WTC11 (cell line): ENCODE measurements at regions of chr11 and their contacts with region 1.

Region 1: DNA sequence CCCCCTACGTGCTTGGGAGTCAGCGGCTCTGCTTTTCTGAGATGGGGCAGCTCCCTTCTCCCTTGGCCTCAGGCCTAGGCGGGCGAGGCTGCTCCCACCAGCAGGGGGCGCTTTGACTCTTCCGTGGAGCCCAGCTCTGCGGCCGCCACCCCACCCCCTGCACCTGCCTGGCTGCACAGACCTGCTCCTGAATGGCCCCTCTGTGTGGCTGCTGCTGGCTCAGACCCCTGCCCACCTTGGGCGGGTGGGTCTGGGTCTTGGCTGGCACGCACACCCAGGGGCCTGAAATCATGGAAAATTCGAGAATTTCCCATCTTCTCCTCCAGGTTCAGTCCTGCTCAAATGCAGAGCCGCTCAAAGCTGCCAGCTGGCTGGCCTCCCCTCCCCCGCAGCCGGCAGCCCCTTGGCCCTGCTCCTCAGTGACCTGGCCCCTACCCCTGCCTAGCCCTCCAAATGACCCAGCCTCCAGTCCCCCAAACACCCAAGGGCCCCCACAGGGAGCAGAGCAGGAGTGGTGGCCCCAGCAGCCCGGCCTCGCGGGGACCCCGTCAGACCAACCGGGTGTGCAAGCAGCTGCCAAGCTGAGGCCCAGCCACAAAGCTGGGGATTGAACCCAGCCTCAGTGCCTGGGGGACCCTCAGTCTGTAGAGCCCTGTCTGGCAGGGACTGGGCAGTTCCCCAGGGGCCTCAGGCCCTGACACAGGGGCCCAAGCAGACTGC is 9.0 kb downstream of the PRR33 start:
- DNase-seq: peak; percentile 89
- ATAC-seq: peak; percentile 97
- H3K4me3 Mint-ChIP-seq: no peak overlapping the region
- H3K27ac Mint-ChIP-seq: no peak overlapping the region
- H3K4me1 Mint-ChIP-seq: no peaks in the 10 kb centered on the region
- H3K27me3 Mint-ChIP-seq: no peaks in the 10 kb centered on the region
- CTCF ChIP-seq: peak; percentile 95

Region 2: DNA sequence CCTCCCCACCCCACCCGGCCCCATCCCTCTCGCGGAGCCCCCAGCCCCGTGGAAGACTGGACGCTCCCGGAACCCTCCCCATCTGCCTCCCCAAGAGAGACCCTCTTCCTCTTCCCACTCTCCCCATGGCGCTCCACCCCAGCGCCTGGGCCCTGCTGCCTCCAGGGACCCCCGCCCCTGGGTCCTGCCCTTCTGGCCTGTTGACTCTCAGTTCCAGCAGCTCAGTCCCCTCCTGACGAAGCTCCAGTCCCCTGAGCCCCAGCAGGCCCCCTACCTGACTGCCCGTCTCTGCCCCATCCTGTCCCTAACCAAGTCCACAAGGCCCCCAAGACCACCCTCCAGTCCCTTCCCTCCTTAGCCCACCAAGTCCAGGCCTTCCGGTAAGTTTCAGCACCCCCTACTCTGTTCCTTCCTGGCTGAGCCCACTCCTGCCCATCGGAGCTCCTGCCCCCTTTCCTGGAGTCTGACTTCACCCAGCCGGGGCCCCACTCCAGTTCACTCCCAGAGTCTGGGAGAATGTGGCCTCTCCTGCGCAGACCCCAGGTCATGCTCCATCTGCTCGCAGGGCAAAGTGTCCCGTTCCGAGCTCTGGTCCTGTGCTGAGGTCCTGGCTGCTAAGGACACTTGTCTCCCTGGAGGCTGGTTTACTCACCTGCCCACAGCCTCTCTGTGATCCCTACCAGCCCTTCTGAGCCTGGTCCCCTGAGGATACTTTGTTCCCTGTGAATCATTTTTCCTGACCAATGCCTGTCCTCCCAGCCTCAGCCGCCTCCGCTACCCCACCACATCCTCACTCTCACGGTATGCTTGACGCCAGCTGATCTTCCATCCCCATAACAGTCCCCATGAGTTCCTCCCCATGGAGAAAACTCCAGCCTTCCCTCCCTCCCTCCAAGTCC is 133.0 kb before region 1 on chr11:
- CTCF ChIA-PET with region 1: no interaction called
- POLR2A ChIA-PET with region 1: no interaction called
- DNase-seq: no peak
- ATAC-seq: peak; percentile 6
- H3K4me3 Mint-ChIP-seq: peak overlapping the region; percentile 57
- H3K27ac Mint-ChIP-seq: no peak overlapping the region
- H3K4me1 Mint-ChIP-seq: peaks cover 12% of the 10 kb centered on the region
- H3K27me3 Mint-ChIP-seq: peaks cover 51% of the 10 kb centered on the region
- CTCF ChIP-seq: no peak

Region 3: GRCh38 chr11:1760351-1761109 is 122.1 kb before region 1 on chr11:
- CTCF ChIA-PET with region 1: no interaction called
- POLR2A ChIA-PET with region 1: no interaction called
- DNase-seq: no peak
- ATAC-seq: no peak
- H3K4me3 Mint-ChIP-seq: no peak overlapping the region
- H3K27ac Mint-ChIP-seq: no peak overlapping the region
- H3K4me1 Mint-ChIP-seq: 0 out of 2 replicates have a peak, but pooled peaks cover 3% of the 10 kb centered on the region
- H3K27me3 Mint-ChIP-seq: 0 out of 2 replicates have a peak, but pooled peaks cover 3% of the 10 kb centered on the region
- CTCF ChIP-seq: no peak

Region 4: GRCh38 chr11:1832211-1832919 is 50.3 kb before region 1 on chr11:
- CTCF ChIA-PET with region 1: interaction called, 21 read pairs
- POLR2A ChIA-PET with region 1: no interaction called
- DNase-seq: peak; percentile 77
- ATAC-seq: peak; percentile 75
- H3K4me3 Mint-ChIP-seq: peak overlapping the region; percentile 49
- H3K27ac Mint-ChIP-seq: no peak overlapping the region
- H3K4me1 Mint-ChIP-seq: 0 out of 2 replicates have a peak, but pooled peaks cover 2% of the 10 kb centered on the region
- H3K27me3 Mint-ChIP-seq: peaks cover 5% of the 10 kb centered on the region
- CTCF ChIP-seq: peak; percentile 97

Region 5: DNA sequence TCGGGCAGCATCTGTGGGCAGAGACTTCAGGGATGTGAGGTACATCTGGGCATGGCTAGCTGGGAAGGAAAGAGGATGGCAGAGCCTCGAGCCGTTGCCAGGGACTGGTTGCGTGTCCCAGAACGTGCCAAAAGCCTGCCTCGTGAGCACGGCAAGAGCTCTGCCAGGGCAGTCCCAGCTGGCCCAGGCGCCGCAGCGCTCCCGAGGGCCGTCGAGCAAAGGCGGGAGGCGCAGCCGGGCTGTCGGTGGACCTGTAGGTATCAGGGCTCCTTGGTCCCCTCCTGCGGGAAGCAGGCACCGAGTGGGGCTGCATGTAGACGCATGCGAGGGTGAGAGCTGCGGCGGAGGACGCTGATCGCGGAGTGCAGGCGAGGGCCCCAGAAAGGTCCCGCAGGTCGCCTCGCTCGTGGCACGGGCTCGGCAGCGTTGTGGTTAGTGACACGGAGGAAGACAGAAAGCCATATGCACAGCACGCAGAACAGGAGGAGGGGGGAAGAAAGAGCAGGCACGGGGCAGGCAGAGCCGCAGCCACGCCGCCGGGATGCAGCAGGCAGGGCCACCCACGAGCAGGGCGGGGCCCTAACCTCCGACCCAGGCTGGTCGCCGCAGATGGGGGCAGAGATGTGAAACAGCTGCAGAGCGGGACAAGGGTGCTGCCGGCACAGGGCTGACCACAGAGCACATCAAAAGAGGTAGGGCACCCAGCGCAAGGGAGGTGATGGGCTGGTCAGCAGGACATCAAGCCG is 11.8 kb before region 1 on chr11:
- CTCF ChIA-PET with region 1: interaction called, 18 read pairs
- POLR2A ChIA-PET with region 1: no interaction called
- DNase-seq: no peak
- ATAC-seq: no peak
- H3K4me3 Mint-ChIP-seq: no peak overlapping the region
- H3K27ac Mint-ChIP-seq: no peak overlapping the region
- H3K4me1 Mint-ChIP-seq: no peaks in the 10 kb centered on the region; the same call in 1 of the 2 replicates
- H3K27me3 Mint-ChIP-seq: no peaks in the 10 kb centered on the region
- CTCF ChIP-seq: no peak

Region 6: DNA sequence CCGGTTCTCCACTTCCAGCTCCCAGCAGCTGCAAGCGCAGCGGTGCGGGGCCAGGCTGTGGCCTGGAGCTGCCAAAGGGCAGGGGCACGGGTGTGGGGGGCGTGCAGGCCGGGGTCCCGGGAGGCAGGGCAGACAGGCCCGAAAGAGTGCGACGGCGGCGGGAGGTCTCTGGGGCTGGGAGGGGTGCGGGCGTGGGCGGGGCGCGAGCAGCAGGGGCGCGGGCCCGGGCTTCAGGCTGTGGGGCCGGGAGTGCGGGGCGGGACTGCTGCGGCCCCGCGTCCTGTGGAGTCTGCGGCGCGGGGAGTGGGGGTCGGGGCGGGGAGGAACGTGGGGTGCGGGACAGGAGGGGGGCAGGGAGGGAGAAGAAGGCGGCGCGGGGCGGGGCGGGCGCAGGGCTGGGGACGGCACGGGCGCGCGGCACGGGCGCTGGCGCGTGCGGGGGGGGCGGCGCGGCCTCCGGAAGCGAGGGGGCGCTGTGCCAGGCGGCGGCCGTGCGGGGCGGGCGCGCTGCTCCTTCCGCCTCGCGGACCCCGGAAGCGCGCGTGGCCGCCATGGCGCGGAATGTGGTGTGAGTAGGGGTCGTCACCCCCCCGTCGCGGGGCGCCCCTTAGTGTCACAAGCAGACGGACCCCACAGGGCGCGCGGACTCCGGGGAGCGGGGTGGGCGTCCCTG is 64.3 kb after region 1 on chr11 and contains the start of gene MRPL23:
- CTCF ChIA-PET with region 1: interaction called, 62 read pairs
- POLR2A ChIA-PET with region 1: no interaction called
- DNase-seq: no peak
- ATAC-seq: peak; percentile 27
- H3K4me3 Mint-ChIP-seq: no peak within 1 kb of the TSS
- H3K27ac Mint-ChIP-seq: no peak within 1 kb of the TSS
- H3K4me1 Mint-ChIP-seq: peaks cover 3% of the 10 kb centered on the region
- H3K27me3 Mint-ChIP-seq: no peaks in the 10 kb centered on the region
- CTCF ChIP-seq: no peak
- total RNA-seq, gene MRPL23: 59.4 to 73.0 TPM (median 61.0 TPM) in 3 replicates

Region 7: GRCh38 chr11:1988667-1989317 is 106.1 kb after region 1 on chr11:
- CTCF ChIA-PET with region 1: interaction called, 10 read pairs
- POLR2A ChIA-PET with region 1: no interaction called
- DNase-seq: no peak
- ATAC-seq: peak; percentile 44; the same call in 1 of the 2 replicates
- H3K4me3 Mint-ChIP-seq: no peak overlapping the region
- H3K27ac Mint-ChIP-seq: no peak overlapping the region
- H3K4me1 Mint-ChIP-seq: no peaks in the 10 kb centered on the region
- H3K27me3 Mint-ChIP-seq: no peaks in the 10 kb centered on the region
- CTCF ChIP-seq: no peak